Activated CD4-positive, alpha-beta memory T cell treated with anti-CD3 and anti-CD28 coated beads, Interleukin-2, amount 10 ng/mL, durations not matched to agents 7 days and 5 days (primary cell): ENCODE measurements at regions of chr3 and their contacts with region 1.

Region 1: GRCh38 chr3:40191850-40192448 is 117.6 kb upstream of the EIF1B start:
- DNase-seq: peak; percentile 58
- H3K4me3 Mint-ChIP-seq: no peak overlapping the region
- H3K27ac Mint-ChIP-seq: no peak overlapping the region
- H3K4me1 Mint-ChIP-seq: no peaks in the 10 kb centered on the region
- H3K27me3 Mint-ChIP-seq: peaks cover 4% of the 10 kb centered on the region

Region 2: GRCh38 chr3:39927479-39927878 is 264.5 kb before region 1 on chr3:
- CTCF ChIA-PET with region 1: no interaction called
- POLR2A ChIA-PET with region 1: no interaction called
- DNase-seq: no peak
- H3K4me3 Mint-ChIP-seq: no peak overlapping the region
- H3K27ac Mint-ChIP-seq: no peak overlapping the region
- H3K4me1 Mint-ChIP-seq: no peaks in the 10 kb centered on the region
- H3K27me3 Mint-ChIP-seq: no peaks in the 10 kb centered on the region

Region 3: GRCh38 chr3:40179016-40179415 is 12.9 kb before region 1 on chr3:
- CTCF ChIA-PET with region 1: interaction called, 14 read pairs
- POLR2A ChIA-PET with region 1: no interaction called
- DNase-seq: peak; percentile 58
- H3K4me3 Mint-ChIP-seq: no peak overlapping the region
- H3K27ac Mint-ChIP-seq: no peak overlapping the region
- H3K4me1 Mint-ChIP-seq: no peaks in the 10 kb centered on the region
- H3K27me3 Mint-ChIP-seq: no peaks in the 10 kb centered on the region

Region 4: DNA sequence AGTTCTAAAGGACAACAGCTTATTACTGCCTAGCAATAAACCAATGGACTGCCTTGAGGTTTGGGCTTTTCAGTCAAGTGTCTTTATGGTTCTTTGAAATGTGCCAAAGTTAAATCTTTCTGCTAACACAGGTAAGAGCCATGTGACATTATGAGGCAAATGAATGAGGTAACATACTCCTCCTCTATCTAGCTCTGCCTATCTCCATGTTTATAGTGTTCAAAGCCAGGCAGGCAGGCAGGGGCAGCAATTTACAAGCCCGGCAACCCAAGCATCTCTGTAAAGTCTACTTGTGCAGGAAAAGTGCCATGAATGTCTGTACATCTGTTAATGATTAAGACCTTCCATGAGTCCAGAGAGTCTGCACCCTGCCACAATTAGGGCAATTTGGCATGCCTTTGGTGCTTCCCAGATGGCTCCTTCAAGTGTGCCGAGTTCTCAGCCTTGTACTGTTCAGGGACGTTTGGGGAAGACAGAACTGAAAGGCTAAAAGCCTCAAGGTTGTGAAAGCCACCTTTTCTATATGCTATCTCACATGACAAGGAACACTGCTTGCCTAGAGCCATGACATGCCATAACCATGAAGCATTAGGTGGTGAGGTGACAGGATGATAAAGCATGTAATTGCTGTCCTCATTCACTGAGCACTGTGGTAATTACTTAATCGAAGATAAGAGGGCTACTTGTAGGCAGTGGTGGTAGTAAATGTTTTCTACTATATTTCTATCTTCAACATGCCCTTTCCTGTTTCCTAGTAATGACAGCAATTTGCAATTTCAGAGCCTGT is 76.2 kb after region 1 on chr3:
- CTCF ChIA-PET with region 1: no interaction called
- POLR2A ChIA-PET with region 1: no interaction called
- DNase-seq: no peak
- H3K4me3 Mint-ChIP-seq: no peak overlapping the region
- H3K27ac Mint-ChIP-seq: no peak overlapping the region
- H3K4me1 Mint-ChIP-seq: no peaks in the 10 kb centered on the region
- H3K27me3 Mint-ChIP-seq: no peaks in the 10 kb centered on the region

Region 5: DNA sequence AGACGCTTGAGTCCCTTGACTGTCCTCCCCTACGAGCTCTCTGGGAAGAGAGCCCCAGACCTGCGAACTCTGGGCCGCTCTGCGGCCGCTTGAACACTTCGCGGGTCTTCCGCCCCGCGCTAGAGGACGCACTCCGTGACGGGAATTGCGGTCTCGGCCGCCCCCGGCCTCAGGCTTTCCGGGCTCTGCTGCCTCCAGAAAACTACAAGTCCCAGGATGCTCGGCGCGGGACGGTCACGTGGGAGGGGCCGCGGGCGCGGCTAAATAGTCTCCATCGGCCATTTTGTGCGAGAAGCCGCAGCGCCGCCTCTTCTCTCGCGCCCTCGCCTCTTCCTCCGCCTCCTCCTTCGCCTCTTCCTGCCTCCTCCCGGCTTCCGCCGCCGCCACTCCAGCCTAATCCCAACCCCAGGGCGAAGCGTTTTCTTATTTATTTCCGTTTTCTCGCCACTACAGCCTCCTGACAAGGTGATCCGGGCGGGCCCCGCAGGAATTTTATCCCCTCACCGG is 117.5 kb after region 1 on chr3 and contains the start of gene EIF1B:
- CTCF ChIA-PET with region 1: interaction called, 28 read pairs
- POLR2A ChIA-PET with region 1: interaction called, 8 read pairs
- DNase-seq: peak; percentile 98
- H3K4me3 Mint-ChIP-seq: peak within 1 kb of the TSS; percentile 98
- H3K27ac Mint-ChIP-seq: peak within 1 kb of the TSS; percentile 94
- H3K4me1 Mint-ChIP-seq: peaks cover 28% of the 10 kb centered on the region
- H3K27me3 Mint-ChIP-seq: no peaks in the 10 kb centered on the region
- total RNA-seq, gene EIF1B: 39.2 to 41.9 TPM

Region 6: GRCh38 chr3:40317061-40317855 is 125.3 kb after region 1 on chr3:
- CTCF ChIA-PET with region 1: interaction called, 80 read pairs
- POLR2A ChIA-PET with region 1: interaction called, 4 read pairs
- DNase-seq: peak; percentile 43
- H3K4me3 Mint-ChIP-seq: no peak overlapping the region
- H3K27ac Mint-ChIP-seq: no peak overlapping the region
- H3K4me1 Mint-ChIP-seq: peaks cover 7% of the 10 kb centered on the region
- H3K27me3 Mint-ChIP-seq: no peaks in the 10 kb centered on the region